Cardiac septum (tissue), 1 donor: ENCODE measurements at regions of chr22 and their contacts with region 1.

Region 1: GRCh38 chr22:46934746-46935491 is 172.5 kb downstream of the TBC1D22A start:
- DNase-seq: no peak

Region 2: DNA sequence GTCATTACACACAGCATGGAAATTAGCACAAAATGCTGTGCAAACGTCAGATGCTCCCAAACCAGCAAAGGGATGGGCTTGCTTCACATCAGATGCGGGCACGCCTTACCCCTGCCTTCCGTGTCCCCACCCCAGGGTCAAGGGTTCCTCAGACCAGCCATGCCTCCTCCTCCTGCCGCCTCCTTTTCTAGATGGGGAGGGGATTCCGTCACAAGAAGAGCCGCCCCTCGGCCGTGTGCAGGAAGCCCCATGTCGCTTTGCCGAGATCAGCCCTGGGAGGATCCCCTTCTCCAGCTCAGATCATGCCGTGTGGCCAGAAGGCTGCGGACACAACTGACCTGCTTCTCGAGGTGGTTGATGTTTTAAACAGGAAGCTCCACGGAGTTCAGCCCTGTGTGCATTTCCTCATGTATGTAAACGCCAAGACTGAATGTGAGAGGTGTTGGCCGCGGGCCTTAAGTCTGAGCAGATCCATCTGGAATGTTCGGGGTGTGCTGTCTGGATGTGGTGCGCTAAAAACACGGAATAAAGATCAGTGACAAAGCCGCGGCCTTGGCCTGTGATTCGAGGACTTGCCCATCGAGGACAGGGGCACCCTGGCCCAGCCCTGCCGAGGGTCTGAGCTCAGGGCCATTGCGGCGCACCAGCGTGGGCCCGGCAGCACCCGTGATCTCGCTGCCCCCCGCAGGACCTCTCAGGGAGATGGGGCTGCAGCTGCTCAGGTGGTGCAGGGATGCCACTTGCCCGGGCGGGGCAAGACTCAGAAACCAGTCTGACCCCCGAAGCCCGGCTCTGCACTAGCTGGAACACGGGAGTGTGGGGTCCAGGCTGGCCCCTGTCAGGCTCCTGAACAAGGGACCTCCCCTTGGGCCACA is 240.5 kb after region 1 on chr22:
- intact Hi-C with region 1: loop called (anchors 10 kb)
- DNase-seq: peak; percentile 75